ENCODE measurements at regions of chr17 and their contacts with region 1.

Region 1: GRCh38 chr17:69246726-69247375 is 18.2 kb upstream of the ABCA10 start:
- DNase-seq: no peak
- ATAC-seq: no peak
- H3K4me3 Mint-ChIP-seq: no peak overlapping the region
- H3K27ac Mint-ChIP-seq: no peak overlapping the region
- H3K4me1 Mint-ChIP-seq: no peaks in the 10 kb centered on the region
- H3K27me3 Mint-ChIP-seq: no peaks in the 10 kb centered on the region

Region 2: DNA sequence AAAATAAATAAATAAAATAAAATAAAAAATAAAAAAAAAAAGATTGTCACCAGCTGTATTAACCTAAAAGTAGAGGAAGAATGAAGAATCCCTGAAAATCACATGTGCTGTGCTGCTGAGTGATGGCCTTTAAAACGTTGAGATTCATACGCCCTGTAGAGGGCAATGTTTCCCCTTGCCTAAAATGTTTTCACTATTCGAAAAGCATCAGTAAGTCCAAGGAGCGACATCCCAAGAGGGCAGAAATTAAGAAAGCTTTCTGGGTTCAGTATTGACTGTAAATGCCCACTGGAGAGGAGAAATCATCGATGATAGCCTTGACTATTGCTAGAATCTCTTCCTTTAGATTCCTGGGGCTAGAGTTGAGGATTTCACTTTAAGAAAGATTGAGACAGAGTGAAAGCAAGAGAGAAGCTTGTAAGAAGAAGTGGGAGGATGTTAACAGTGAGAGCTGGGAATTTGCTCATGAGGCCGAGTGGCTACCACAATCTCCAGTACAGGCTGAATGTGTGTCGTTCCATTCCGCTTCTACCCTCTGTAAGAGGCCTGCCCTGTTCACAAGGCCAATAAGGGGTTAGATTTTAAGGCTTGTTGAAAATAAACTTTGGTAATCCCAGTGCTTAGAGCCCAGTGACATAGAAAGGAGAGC is 474.9 kb before region 1 on chr17:
- CTCF ChIA-PET with region 1: interaction called, 19 read pairs
- POLR2A ChIA-PET with region 1: no interaction called
- DNase-seq: peak; percentile 30
- ATAC-seq: peak; percentile 53
- H3K4me3 Mint-ChIP-seq: peak overlapping the region; percentile 42
- H3K27ac Mint-ChIP-seq: no peak overlapping the region
- H3K4me1 Mint-ChIP-seq: peaks cover 5% of the 10 kb centered on the region
- H3K27me3 Mint-ChIP-seq: no peaks in the 10 kb centered on the region

Region 3: DNA sequence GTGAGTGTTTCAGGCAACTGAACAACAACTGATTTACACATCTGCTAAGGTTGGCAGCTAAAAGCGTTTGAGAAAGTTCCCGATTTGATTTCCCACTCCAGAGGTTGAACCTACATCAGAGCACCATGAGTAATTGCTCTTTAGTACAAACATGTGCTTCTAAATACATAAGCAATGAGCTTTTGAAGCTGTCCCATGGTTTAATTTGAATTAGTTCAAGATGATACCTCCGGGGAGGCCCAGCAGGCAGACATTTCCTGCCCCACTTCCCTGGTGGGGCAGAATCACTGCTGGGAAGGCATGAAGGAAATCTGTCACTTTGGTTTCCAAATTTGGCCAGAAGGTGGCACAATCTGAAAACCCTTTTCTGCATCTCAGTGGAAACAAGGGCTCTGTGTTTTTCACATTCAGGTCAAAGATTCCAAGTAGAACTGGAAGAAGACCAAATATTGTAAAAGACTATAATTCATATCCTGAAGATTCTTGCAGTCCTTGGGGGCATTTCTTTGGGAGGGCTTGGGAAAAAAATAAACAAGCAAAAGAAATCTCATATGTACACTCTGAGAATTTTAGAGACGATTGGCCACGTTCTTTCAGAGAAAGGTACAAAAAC is 469.5 kb before region 1 on chr17:
- CTCF ChIA-PET with region 1: interaction called, 19 read pairs
- POLR2A ChIA-PET with region 1: no interaction called
- DNase-seq: peak; percentile 45
- ATAC-seq: no peak
- H3K4me3 Mint-ChIP-seq: no peak overlapping the region
- H3K27ac Mint-ChIP-seq: no peak overlapping the region
- H3K4me1 Mint-ChIP-seq: no peaks in the 10 kb centered on the region
- H3K27me3 Mint-ChIP-seq: peaks cover 4% of the 10 kb centered on the region